Ovary (tissue), 10 donors: ENCODE measurements at regions of chr4 and their contacts with region 1.

Region 1: GRCh38 chr4:89434364-89434988 is 126.9 kb upstream of the GPRIN3 start:
- DNase-seq: no peak
- H3K4me3 ChIP-seq: no peak overlapping the region
- H3K27ac ChIP-seq: no peak overlapping the region
- H3K4me1 ChIP-seq: no peaks in the 10 kb centered on the region
- H3K27me3 ChIP-seq: no peaks in the 10 kb centered on the region
- CTCF ChIP-seq: peak in 2 of 3 donors; percentile 43 to 70
- EP300 ChIP-seq: no peak
- POLR2A ChIP-seq: no peak

Region 2: GRCh38 chr4:89226665-89227574 is 207.6 kb before region 1 on chr4:
- intact Hi-C with region 1: loop called in 3 of 4 experiments (anchors 2 to 5 kb)
- DNase-seq: peak; percentile 73 to 80 (median 77)
- H3K4me3 ChIP-seq: no peak overlapping the region
- H3K27ac ChIP-seq: no peak overlapping the region
- H3K4me1 ChIP-seq: no peaks in the 10 kb centered on the region
- H3K27me3 ChIP-seq: no peaks in the 10 kb centered on the region
- CTCF ChIP-seq: peak; percentile 57 to 74 (median 64)
- EP300 ChIP-seq: no peak
- POLR2A ChIP-seq: no peak